CD8-positive, alpha-beta T cell (primary cell): ENCODE measurements at regions of chr1 and their contacts with region 1.

Region 1: DNA sequence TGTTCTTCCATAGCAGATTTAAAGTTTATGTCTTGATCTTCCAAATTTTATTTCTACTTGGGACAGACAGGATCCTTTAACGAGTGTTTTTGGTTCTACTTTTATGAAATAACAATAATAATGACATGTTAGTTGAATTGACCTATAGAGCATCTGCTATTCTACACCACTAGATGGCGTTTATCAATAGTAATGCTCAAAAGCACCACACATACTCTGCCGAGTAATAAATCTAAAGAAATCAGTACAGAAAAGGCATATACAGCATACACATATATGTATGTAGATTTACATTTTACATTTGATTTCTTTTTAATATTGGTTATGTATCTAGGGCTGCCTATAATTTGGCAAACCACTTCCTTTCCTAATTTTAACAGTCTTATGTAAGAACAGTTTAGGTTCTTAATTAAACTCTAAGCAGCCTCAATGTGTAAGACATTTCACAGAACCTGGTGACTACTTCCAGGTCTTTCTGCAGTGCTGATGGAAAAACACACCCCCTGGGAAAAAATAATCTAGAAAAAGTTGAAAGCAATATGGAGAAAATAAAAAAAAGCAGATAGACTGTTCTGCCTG is 5.9 kb upstream of the SIPA1L2 start:
- DNase-seq: peak in 2 of 9 experiments; percentile 54 to 67
- ATAC-seq: peak; percentile 71
- H3K4me3 ChIP-seq: no peak overlapping the region
- H3K4me3 Mint-ChIP-seq: no peak overlapping the region
- H3K27ac ChIP-seq: no peak overlapping the region
- H3K27ac Mint-ChIP-seq: no peak overlapping the region
- H3K4me1 ChIP-seq: peaks cover under 1% of the 10 kb centered on the region
- H3K4me1 Mint-ChIP-seq: peaks cover 2% of the 10 kb centered on the region
- H3K27me3 ChIP-seq: no peaks in the 10 kb centered on the region
- H3K27me3 Mint-ChIP-seq: peaks cover 22% of the 10 kb centered on the region
- CTCF ChIP-seq: peak; percentile 87

Region 2: DNA sequence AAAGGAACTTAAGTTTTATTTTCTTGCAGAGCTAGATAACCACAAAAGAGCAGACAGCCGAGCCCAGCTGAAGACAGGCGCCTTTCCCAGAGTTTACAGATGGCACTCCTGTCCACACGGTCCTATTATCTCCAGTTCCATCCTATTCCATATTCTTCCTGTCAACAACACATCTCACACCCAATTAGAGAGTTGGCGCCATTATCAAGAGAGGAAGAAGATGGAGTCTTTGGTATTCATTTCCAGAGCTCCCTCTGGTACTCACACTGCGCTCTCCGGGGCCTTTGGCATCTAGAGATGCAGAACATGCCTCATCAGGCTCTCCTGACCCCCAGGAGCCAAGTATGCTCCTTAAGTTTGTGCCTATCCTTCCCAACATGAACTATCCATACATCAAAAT is 37.4 kb after region 1 on chr1:
- CTCF ChIA-PET with region 1: no interaction called
- POLR2A ChIA-PET with region 1: no interaction called
- intact Hi-C with region 1: no loop called
- DNase-seq: no peak
- ATAC-seq: no peak
- H3K4me3 ChIP-seq: no peak overlapping the region
- H3K4me3 Mint-ChIP-seq: no peak overlapping the region
- H3K27ac ChIP-seq: no peak overlapping the region
- H3K27ac Mint-ChIP-seq: no peak overlapping the region
- H3K4me1 ChIP-seq: no peaks in the 10 kb centered on the region
- H3K4me1 Mint-ChIP-seq: no peaks in the 10 kb centered on the region
- H3K27me3 ChIP-seq: no peaks in the 10 kb centered on the region
- H3K27me3 Mint-ChIP-seq: peaks cover 7% of the 10 kb centered on the region
- CTCF ChIP-seq: no peak

Region 3: GRCh38 chr1:232793944-232794343 is 158.1 kb after region 1 on chr1:
- CTCF ChIA-PET with region 1: interaction called, 6 read pairs
- POLR2A ChIA-PET with region 1: no interaction called
- intact Hi-C with region 1: loop called (anchors 1 to 5 kb)
- DNase-seq: peak in 3 of 9 experiments; percentile 6 to 54 (median 39)
- ATAC-seq: peak; percentile 48
- H3K4me3 ChIP-seq: no peak overlapping the region
- H3K4me3 Mint-ChIP-seq: no peak overlapping the region
- H3K27ac ChIP-seq: no peak overlapping the region
- H3K27ac Mint-ChIP-seq: peak overlapping the region; percentile 15
- H3K4me1 ChIP-seq: peaks cover 11% of the 10 kb centered on the region
- H3K4me1 Mint-ChIP-seq: peaks cover 13% of the 10 kb centered on the region
- H3K27me3 ChIP-seq: no peaks in the 10 kb centered on the region
- H3K27me3 Mint-ChIP-seq: peaks cover 2% of the 10 kb centered on the region
- CTCF ChIP-seq: no peak

Region 4: GRCh38 chr1:233025157-233025915 is 389.5 kb after region 1 on chr1:
- CTCF ChIA-PET with region 1: interaction called, 5 read pairs
- POLR2A ChIA-PET with region 1: no interaction called
- intact Hi-C with region 1: loop called in 1 of 2 experiments (anchors 2 kb)
- DNase-seq: peak in 2 of 9 experiments; percentile 22 to 34
- ATAC-seq: no peak
- H3K4me3 ChIP-seq: no peak overlapping the region
- H3K4me3 Mint-ChIP-seq: no peak overlapping the region
- H3K27ac ChIP-seq: no peak overlapping the region
- H3K27ac Mint-ChIP-seq: no peak overlapping the region
- H3K4me1 ChIP-seq: no peaks in the 10 kb centered on the region
- H3K4me1 Mint-ChIP-seq: no peaks in the 10 kb centered on the region
- H3K27me3 ChIP-seq: no peaks in the 10 kb centered on the region
- H3K27me3 Mint-ChIP-seq: no peaks in the 10 kb centered on the region
- CTCF ChIP-seq: no peak

Region 5: DNA sequence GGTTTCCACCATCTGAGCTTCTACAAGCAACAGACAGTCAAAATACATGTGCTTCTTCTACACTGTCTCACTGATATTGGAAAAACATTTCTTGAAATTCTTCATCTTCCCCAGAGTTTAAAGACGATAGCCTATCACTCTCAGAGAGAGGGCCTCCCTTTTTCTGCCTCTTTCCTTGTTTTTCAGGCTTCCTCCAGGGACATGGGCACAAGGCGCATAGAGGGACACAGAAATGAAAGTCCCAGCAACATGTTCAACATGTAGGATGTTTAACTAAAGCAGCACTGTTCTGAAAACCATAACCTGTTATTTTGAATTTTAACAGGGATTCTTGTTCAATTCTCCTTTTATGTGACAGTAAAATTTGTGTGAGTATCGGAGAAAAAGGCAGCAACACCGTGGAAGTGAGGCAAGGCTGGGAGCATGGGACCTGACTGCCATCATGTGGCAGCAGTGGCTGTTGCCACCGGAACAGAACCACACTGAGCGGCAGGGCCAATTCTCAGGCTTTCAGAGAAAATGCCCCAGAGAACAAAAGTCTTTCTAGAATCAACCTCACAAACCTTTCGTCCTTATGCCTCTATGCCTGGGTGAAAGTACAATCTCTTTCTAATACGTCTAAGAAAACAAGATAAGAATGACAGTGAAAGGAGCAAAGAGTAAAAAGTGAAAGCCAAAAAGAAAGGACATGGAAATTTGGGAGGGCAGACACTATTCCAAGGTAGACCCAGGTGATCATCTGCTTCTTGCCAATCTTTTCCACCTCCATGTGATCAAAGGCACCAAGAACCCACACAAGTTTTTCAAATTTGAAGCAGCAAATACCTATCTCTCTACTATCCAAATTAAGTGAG is 605.2 kb after region 1 on chr1:
- CTCF ChIA-PET with region 1: interaction called, 3 read pairs
- POLR2A ChIA-PET with region 1: no interaction called
- intact Hi-C with region 1: loop called in 1 of 2 experiments (anchors 2 kb)
- DNase-seq: peak in 3 of 9 experiments; percentile 6 to 37 (median 25)
- ATAC-seq: no peak
- H3K4me3 ChIP-seq: no peak overlapping the region
- H3K4me3 Mint-ChIP-seq: no peak overlapping the region
- H3K27ac ChIP-seq: no peak overlapping the region
- H3K27ac Mint-ChIP-seq: no peak overlapping the region
- H3K4me1 ChIP-seq: no peaks in the 10 kb centered on the region
- H3K4me1 Mint-ChIP-seq: no peaks in the 10 kb centered on the region
- H3K27me3 ChIP-seq: no peaks in the 10 kb centered on the region
- H3K27me3 Mint-ChIP-seq: no peaks in the 10 kb centered on the region
- CTCF ChIP-seq: peak; percentile 29